Ovary (tissue), 10 donors: ENCODE measurements at regions of chr1 and their contacts with region 1.

Region 1: DNA sequence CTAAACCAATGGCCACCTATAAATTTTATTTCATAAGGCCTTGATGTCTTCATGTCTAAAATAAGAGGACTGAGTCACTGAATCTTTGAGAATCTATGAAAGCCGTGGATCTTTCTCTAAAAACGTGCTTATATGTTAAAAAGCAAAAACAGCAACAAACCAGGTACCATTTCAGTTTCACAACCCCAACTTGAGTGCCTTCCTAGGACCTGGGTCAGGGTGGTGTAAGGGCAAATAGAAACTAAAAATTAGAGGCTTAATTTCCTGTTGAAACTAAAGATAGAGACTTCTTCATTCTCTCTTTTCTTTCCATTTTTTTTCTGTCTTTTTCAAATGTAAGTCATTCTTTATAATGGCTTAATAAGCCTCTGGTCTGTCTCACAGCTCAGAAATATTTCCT is 27.2 kb upstream of the PGBD5 start:
- DNase-seq: no peak
- H3K4me3 ChIP-seq: no peak overlapping the region
- H3K27ac ChIP-seq: no peak overlapping the region
- H3K4me1 ChIP-seq: no peaks in the 10 kb centered on the region
- H3K27me3 ChIP-seq: no peaks in the 10 kb centered on the region
- CTCF ChIP-seq: no peak
- EP300 ChIP-seq: no peak
- POLR2A ChIP-seq: no peak

Region 2: DNA sequence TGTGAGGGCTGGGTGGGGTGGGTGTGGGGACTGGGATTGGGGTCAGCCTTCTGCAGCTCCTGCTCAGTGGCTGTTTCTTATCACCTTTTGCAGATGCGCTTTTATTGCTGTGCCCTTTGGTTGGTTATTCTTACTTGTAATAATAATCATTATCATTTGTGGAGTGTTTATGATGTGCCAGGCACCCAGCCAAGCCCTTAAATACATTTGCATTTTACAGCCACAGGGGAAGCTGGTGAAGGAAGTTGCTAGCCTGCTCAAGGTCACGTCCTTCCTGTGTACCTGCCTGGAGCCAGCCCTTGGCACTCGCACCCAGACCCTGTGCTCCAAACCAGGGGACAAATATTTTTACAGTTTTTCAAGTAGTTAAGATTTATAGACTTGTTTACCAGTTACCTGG is 171.2 kb before region 1 on chr1:
- intact Hi-C with region 1: no loop called
- DNase-seq: peak in 2 of 5 donors; percentile 12 to 23
- H3K4me3 ChIP-seq: no peak overlapping the region
- H3K27ac ChIP-seq: no peak overlapping the region
- H3K4me1 ChIP-seq: peaks cover 2% of the 10 kb centered on the region
- H3K27me3 ChIP-seq: no peaks in the 10 kb centered on the region
- CTCF ChIP-seq: no peak
- EP300 ChIP-seq: no peak
- POLR2A ChIP-seq: no peak

Region 3: DNA sequence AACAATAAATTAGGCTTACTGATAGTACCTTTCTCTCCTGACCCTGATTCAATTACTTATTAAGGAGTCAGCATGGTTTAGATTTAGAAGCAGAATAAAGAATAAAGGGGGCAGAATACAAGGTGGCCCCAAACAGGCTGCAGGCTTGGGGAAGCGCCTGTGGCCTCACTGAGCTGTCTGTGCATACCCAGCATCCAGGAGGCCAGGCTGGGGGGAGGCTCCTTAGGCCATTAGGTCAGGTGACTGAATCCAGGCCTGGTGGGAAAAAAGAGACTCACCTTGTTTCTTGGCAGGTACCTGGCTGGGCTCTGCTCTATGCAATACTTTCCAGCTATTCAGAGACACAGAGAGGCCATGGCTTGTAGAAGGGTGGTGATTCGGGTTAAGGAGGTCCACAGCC is 66.1 kb before region 1 on chr1:
- intact Hi-C with region 1: loop called in 1 of 4 experiments (anchors 2 kb)
- DNase-seq: no peak
- H3K4me3 ChIP-seq: no peak overlapping the region
- H3K27ac ChIP-seq: no peak overlapping the region
- H3K4me1 ChIP-seq: no peaks in the 10 kb centered on the region
- H3K27me3 ChIP-seq: no peaks in the 10 kb centered on the region
- CTCF ChIP-seq: no peak
- EP300 ChIP-seq: no peak
- POLR2A ChIP-seq: no peak